Ovary (tissue), 10 donors: ENCODE measurements at regions of chrX and their contacts with region 1.

Region 1: GRCh38 chrX:3811331-3812311 is 98.2 kb upstream of the PRKX start:
- DNase-seq: peak; percentile 29 to 43 (median 34)
- H3K4me3 ChIP-seq: no peak overlapping the region
- H3K27ac ChIP-seq: no peak overlapping the region
- H3K4me1 ChIP-seq: no peaks in the 10 kb centered on the region
- H3K27me3 ChIP-seq: no peaks in the 10 kb centered on the region
- CTCF ChIP-seq: peak; percentile 39 to 62 (median 58)
- EP300 ChIP-seq: no peak
- POLR2A ChIP-seq: no peak

Region 2: DNA sequence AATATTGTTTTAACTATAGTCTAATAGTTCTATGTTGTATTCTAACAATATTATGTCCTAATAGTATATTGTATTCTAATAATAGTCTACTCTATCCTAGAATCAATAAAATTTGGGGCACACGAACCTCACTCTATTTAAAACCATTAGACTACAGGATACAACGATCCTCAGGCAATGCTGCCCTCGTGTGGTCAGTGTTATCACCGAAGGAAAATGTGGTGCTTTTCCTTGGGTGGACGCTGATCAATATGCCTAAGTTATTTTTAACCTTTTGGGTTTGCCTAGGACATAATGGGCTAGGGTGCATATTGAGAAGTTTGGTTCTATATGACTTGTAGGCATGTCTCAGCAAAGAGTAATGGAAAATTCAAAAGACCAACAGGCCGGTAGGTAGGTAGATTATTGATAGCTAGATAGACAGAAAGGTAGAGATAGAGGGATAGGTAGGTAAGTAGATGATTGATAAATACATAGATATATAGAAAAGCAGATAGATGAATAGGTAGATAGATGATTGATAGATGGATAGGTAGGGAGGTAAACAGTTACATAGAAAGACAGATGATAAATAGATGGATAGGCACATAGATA is 173.2 kb before region 1 on chrX:
- intact Hi-C with region 1: loop called in 1 of 4 experiments (anchors 5 kb)
- DNase-seq: peak in 4 of 5 donors; percentile 24 to 42 (median 36)
- H3K4me3 ChIP-seq: no peak overlapping the region
- H3K27ac ChIP-seq: no peak overlapping the region
- H3K4me1 ChIP-seq: no peaks in the 10 kb centered on the region
- H3K27me3 ChIP-seq: no peaks in the 10 kb centered on the region
- CTCF ChIP-seq: peak in 1 of 3 donors; percentile 27
- EP300 ChIP-seq: no peak
- POLR2A ChIP-seq: no peak

Region 3: GRCh38 chrX:3651276-3651675 is 160.3 kb before region 1 on chrX:
- intact Hi-C with region 1: loop called in 2 of 4 experiments (anchors 10 kb)
- DNase-seq: no peak
- H3K4me3 ChIP-seq: no peak overlapping the region
- H3K27ac ChIP-seq: no peak overlapping the region
- H3K4me1 ChIP-seq: no peaks in the 10 kb centered on the region
- H3K27me3 ChIP-seq: no peaks in the 10 kb centered on the region
- CTCF ChIP-seq: peak; percentile 13 to 37 (median 35)
- EP300 ChIP-seq: no peak
- POLR2A ChIP-seq: no peak

Region 4: DNA sequence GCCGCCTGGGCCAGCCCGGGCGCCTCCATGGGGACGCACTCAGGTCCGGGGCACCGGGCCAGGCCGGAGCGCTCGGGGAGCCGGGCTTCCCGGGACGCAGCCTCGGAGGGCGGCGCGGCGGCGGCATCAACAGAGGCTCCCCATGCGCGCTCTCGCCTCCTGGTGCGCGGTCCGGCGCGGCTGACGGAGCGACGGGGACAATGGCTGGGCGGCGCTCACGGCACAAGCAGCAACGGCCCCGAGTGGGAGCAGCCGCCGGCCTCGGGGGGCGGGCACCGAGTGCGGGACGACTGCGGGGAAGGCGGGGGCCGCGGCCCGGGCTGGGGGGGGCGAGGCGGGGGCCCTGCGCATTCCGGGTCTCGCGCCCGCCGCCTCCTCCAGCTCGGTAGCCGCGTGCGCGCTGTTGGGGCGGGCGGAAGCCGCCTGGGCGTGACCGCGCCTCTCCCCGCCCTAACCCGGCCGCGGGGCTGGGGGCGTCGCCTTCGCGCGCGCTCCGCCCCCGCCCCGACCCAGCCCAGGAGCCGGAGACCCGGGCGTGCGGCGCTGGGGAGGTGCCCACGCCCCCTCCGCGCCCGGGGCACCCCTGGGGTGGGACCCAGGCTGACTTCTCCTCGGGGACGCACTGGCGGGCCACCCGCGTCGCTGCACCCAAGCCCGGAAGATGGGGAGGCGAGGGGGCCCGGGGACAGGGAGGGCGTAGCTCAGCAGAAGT is 98.2 kb before region 1 on chrX and contains the start of gene PRKX:
- intact Hi-C with region 1: loop called in 1 of 4 experiments (anchors 10 kb)
- DNase-seq: peak; percentile 43 to 74 (median 59)
- H3K4me3 ChIP-seq: peak within 1 kb of the TSS; percentile 57
- H3K27ac ChIP-seq: peak within 1 kb of the TSS; percentile 30 to 48
- H3K4me1 ChIP-seq: peaks cover 2% of the 10 kb centered on the region
- H3K27me3 ChIP-seq: no peaks in the 10 kb centered on the region
- CTCF ChIP-seq: no peak
- EP300 ChIP-seq: no peak
- POLR2A ChIP-seq: no peak
- total RNA-seq, gene PRKX: 7.8 to 23.1 (median 8.3) TPM